ENCODE measurements at regions of chr2 and their contacts with region 1.

Region 1: GRCh38 chr2:151261231-151261976 is at the start of gene RBM43:
- DNase-seq: peak; percentile 93
- ATAC-seq: peak; percentile 95
- H3K4me3 Mint-ChIP-seq: peak within 1 kb of the TSS; percentile 82
- H3K27ac Mint-ChIP-seq: peak within 1 kb of the TSS; percentile 97
- H3K4me1 Mint-ChIP-seq: peaks cover 24% of the 10 kb centered on the region
- H3K27me3 Mint-ChIP-seq: no peaks in the 10 kb centered on the region
- total RNA-seq, gene RBM43: 5.1 to 8.3 TPM

Region 2: GRCh38 chr2:151251012-151251411 is 10.4 kb before region 1 on chr2:
- CTCF ChIA-PET with region 1: no interaction called
- DNase-seq: no peak
- ATAC-seq: no peak
- H3K4me3 Mint-ChIP-seq: no peak overlapping the region
- H3K27ac Mint-ChIP-seq: no peak overlapping the region
- H3K4me1 Mint-ChIP-seq: no peaks in the 10 kb centered on the region
- H3K27me3 Mint-ChIP-seq: no peaks in the 10 kb centered on the region

Region 3: DNA sequence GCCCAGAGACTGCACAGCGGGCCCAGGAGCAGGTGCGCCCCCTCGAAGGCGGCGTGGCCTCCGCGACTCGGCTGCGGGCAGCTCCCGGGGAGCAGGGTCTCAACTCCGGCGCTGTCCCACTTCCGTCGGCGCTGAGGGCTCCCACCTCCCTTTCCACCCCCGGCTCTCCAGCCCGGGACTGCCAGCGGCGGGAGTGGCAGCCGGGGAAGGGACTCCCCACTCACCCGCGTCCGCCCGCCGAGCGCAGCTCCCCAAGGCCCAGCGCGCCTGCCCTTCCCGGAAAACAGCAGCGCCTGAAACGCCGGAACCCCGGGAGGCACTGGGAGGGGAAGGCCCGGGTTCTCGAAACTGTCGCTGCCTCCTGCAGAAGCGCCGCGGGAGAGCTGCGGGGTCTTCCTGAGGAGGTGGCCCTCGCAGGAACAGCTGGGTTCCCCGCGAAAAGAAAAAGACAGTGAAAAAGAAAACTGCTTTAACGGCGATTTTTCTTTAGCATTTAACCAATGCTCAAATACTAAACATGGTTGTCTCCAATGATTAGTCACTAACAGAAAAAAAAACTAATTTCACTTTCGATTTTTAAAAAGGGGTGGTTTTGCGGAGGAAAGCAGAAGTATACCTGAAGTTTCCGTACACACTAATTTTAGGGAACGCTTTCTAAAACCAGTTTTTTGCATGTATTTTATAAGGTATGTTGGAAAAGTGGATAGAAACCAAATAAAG is 28.1 kb after region 1 on chr2 and contains the start of gene NMI:
- CTCF ChIA-PET with region 1: interaction called, 12 read pairs
- DNase-seq: peak; percentile 80
- ATAC-seq: peak; percentile 66
- H3K4me3 Mint-ChIP-seq: peak within 1 kb of the TSS; percentile 84
- H3K27ac Mint-ChIP-seq: peak within 1 kb of the TSS; percentile 99
- H3K4me1 Mint-ChIP-seq: peaks cover 41% of the 10 kb centered on the region
- H3K27me3 Mint-ChIP-seq: no peaks in the 10 kb centered on the region
- total RNA-seq, gene NMI: 63.9 to 73.0 TPM

Region 4: DNA sequence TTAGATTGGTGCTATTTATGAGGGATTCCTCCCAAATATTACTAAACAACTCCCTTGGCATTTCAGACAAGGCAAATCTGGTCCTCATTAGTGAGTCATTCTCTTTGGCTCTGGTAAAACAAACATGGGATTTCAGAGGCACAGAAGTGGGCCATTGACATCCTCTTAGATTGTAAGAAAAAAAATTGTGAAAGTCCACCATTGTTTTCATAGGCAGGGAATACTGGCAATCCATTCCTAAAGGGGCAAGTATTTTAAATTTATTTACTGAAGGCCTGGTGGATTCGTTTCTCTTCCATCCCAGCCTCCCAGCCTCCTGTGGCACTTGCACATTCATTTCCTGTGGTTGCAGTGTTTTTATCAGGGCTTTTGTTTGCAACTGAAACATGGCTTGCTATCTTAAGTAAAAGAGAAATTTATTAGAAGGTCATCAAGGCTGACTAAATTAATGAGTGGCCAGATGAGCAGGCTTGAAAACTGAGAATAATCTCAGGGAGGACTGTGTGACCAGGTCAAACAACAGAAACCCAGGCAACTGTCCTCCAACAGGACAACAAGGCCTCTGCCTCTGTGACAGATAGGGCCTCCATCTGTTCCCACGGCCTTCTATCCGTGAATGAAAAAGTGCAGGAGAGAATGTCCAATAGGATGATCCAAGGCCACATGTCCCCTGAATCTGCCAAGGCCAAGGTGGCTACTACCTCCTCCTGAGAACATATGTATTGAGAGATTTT is 72.8 kb after region 1 on chr2:
- CTCF ChIA-PET with region 1: no interaction called
- DNase-seq: no peak
- ATAC-seq: no peak
- H3K4me3 Mint-ChIP-seq: no peak overlapping the region
- H3K27ac Mint-ChIP-seq: no peak overlapping the region
- H3K4me1 Mint-ChIP-seq: peaks cover 6% of the 10 kb centered on the region
- H3K27me3 Mint-ChIP-seq: peaks cover 35% of the 10 kb centered on the region

Measured in activated CD8-positive, alpha-beta memory T cell treated with anti-CD3 and anti-CD28 coated beads, Interleukin-2, amount 10 ng/mL, durations not matched to agents 7 days and 5 days (primary cell).